Activated CD4-positive, alpha-beta T cell treated with anti-CD3 and anti-CD28 coated beads for 36 hours (primary cell): ENCODE measurements at regions of chr9 and their contacts with region 1.

Region 1: DNA sequence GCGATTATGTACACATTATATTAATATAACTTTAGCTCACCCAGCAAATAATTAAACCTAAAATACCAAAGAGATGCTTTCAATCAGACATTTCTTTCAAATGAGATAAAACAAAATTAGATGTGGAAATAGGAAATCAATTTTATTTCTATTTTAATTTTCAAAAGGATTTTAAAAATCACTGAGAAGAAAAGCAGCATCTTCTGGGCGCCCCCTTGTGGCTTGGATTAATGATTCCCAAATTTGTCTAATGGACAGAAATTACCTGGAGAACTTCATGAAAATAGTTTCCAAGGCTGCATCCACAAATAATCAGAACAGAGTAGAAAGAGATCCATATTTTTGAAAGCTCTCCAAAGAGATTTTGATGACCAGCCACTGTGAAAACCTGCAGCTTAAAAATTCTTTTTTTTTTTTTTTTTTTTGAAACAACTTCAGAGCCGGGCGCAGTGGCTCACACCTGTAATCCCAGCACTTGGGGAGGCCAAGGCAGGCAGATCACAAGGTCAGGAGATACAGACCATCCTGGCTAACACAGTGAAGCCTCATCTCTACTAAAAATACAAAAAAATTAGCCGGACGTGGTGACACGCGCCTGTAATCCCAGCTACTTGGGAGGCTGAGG is 50.9 kb upstream of the CEMIP2 start:
- DNase-seq: peak; percentile 59
- ATAC-seq: no peak
- H3K4me3 Mint-ChIP-seq: no peak overlapping the region
- H3K27ac Mint-ChIP-seq: no peak overlapping the region
- H3K4me1 Mint-ChIP-seq: peaks cover 15% of the 10 kb centered on the region
- H3K27me3 Mint-ChIP-seq: no peaks in the 10 kb centered on the region

Region 2: GRCh38 chr9:71604197-71605063 is 214.8 kb before region 1 on chr9:
- CTCF ChIA-PET with region 1: interaction called, 5 read pairs
- POLR2A ChIA-PET with region 1: no interaction called
- intact Hi-C with region 1: loop called (anchors 1 to 2 kb)
- DNase-seq: peak; percentile 90
- ATAC-seq: peak; percentile 78
- H3K4me3 Mint-ChIP-seq: no peak overlapping the region
- H3K27ac Mint-ChIP-seq: no peak overlapping the region
- H3K4me1 Mint-ChIP-seq: no peaks in the 10 kb centered on the region
- H3K27me3 Mint-ChIP-seq: no peaks in the 10 kb centered on the region

Region 3: GRCh38 chr9:71704796-71705195 is 114.4 kb before region 1 on chr9:
- CTCF ChIA-PET with region 1: no interaction called
- POLR2A ChIA-PET with region 1: no interaction called
- intact Hi-C with region 1: no loop called
- DNase-seq: no peak
- ATAC-seq: peak; percentile 49
- H3K4me3 Mint-ChIP-seq: no peak overlapping the region
- H3K27ac Mint-ChIP-seq: peak overlapping the region; percentile 21
- H3K4me1 Mint-ChIP-seq: peaks cover 9% of the 10 kb centered on the region
- H3K27me3 Mint-ChIP-seq: no peaks in the 10 kb centered on the region

Region 4: GRCh38 chr9:71801826-71802225 is 17.4 kb before region 1 on chr9:
- CTCF ChIA-PET with region 1: interaction called, 74 read pairs
- POLR2A ChIA-PET with region 1: interaction called, 3 read pairs
- intact Hi-C with region 1: no loop called
- DNase-seq: no peak
- ATAC-seq: no peak
- H3K4me3 Mint-ChIP-seq: no peak overlapping the region
- H3K27ac Mint-ChIP-seq: no peak overlapping the region
- H3K4me1 Mint-ChIP-seq: peaks cover 6% of the 10 kb centered on the region
- H3K27me3 Mint-ChIP-seq: no peaks in the 10 kb centered on the region

Region 5: DNA sequence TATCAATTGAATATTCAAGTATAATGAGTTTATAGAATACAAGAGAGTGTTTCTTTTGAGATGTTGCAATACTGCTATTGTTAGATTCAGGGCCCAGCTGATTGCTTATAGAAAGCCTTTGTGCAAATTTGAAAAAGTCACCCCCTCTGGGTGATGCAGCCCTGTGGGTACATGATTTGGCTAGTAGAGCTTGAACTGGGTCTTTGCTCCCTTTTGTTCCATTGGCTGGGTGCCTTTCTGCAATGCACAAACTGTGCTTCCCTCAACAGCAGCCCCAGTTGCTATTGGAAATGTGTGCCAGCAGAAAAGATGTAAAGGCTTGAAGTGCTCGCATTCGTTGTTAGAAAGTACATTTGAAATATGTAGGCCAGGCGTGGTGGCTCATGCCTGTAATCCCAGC is 10.9 kb after region 1 on chr9:
- CTCF ChIA-PET with region 1: interaction called, 13 read pairs
- POLR2A ChIA-PET with region 1: no interaction called
- intact Hi-C with region 1: no loop called
- DNase-seq: no peak
- ATAC-seq: no peak
- H3K4me3 Mint-ChIP-seq: no peak overlapping the region
- H3K27ac Mint-ChIP-seq: no peak overlapping the region
- H3K4me1 Mint-ChIP-seq: no peaks in the 10 kb centered on the region
- H3K27me3 Mint-ChIP-seq: no peaks in the 10 kb centered on the region

Region 6: DNA sequence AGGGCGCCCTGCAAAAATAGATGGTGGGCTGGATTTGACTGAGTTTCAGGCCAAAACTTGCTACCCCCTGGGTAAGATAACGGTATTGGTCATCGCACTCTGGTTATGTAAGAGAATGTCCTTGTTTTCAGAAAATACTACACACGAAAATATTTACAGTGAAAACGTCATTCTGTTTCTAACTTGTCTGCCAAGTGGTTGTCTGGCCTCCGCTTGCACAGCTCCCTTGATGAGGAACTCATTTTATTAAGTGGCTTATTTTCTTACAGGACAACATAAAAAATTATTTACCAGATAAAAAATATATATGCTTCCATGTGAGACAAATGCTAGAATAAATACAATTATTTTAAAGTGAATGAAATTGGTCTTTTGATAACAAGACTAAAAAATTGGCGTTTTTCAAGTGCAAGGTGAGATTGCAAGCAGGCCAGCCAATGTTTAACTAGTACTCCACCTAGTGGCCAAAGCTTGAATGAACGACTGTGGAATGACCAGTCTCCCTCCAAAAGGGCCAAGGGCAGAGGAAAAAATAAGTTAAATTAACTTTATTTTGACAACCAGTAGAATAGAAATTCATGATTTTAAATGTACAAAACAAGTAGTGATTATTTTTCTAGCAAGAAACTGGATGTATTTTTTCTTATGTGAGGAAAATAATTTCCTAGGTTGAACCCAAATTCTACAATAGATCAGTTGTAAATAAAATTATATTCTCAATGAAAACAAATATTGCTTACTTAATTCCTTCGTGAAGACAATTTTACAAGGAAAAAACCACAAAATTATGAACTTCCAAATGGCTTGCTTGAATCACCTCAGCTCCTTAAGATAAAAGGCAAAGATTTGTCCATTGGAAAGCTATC is 452.6 kb after region 1 on chr9:
- CTCF ChIA-PET with region 1: no interaction called
- POLR2A ChIA-PET with region 1: no interaction called
- intact Hi-C with region 1: loop called in 1 of 2 experiments (anchors 5 kb)
- DNase-seq: peak; percentile 66
- ATAC-seq: no peak
- H3K4me3 Mint-ChIP-seq: no peak overlapping the region
- H3K27ac Mint-ChIP-seq: no peak overlapping the region
- H3K4me1 Mint-ChIP-seq: no peaks in the 10 kb centered on the region
- H3K27me3 Mint-ChIP-seq: no peaks in the 10 kb centered on the region

Region 7: DNA sequence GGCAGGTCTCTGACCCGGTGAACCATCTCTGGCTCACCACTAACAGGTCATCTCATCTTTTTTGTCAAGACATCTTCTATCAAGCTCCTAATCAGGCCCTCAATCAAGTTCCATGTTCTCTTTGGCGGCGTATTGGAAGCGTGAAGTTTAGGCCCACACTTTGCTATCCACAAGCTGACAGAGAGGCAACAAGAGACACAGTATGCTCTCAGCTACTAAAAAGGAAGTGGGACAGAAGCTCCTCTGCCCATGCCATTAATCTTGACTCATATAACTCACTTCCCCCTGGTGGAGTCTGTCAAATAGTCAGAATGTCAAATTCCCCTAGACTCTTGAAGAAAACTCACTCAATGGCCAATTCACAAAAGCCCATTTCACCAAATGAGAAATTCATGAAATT is 624.6 kb after region 1 on chr9:
- CTCF ChIA-PET with region 1: no interaction called
- POLR2A ChIA-PET with region 1: no interaction called
- intact Hi-C with region 1: no loop called
- DNase-seq: peak; percentile 8
- ATAC-seq: peak; percentile 72
- H3K4me3 Mint-ChIP-seq: no peak overlapping the region
- H3K27ac Mint-ChIP-seq: peak overlapping the region; percentile 55
- H3K4me1 Mint-ChIP-seq: peaks cover 24% of the 10 kb centered on the region
- H3K27me3 Mint-ChIP-seq: no peaks in the 10 kb centered on the region